Aorta (tissue), 5 donors: ENCODE measurements at regions of chr12 and their contacts with region 1.

Region 1: GRCh38 chr12:53065975-53066931 is 12.9 kb downstream of the SPRYD3 start:
- DNase-seq: peak; percentile 86 to 93
- ATAC-seq: peak; percentile 79
- H3K4me3 ChIP-seq: no peak overlapping the region
- H3K27ac ChIP-seq: peak overlapping the region in 1 of 2 donors; percentile 80
- H3K4me1 ChIP-seq: no peaks in the 10 kb centered on the region
- H3K27me3 ChIP-seq: no peaks in the 10 kb centered on the region

Region 2: DNA sequence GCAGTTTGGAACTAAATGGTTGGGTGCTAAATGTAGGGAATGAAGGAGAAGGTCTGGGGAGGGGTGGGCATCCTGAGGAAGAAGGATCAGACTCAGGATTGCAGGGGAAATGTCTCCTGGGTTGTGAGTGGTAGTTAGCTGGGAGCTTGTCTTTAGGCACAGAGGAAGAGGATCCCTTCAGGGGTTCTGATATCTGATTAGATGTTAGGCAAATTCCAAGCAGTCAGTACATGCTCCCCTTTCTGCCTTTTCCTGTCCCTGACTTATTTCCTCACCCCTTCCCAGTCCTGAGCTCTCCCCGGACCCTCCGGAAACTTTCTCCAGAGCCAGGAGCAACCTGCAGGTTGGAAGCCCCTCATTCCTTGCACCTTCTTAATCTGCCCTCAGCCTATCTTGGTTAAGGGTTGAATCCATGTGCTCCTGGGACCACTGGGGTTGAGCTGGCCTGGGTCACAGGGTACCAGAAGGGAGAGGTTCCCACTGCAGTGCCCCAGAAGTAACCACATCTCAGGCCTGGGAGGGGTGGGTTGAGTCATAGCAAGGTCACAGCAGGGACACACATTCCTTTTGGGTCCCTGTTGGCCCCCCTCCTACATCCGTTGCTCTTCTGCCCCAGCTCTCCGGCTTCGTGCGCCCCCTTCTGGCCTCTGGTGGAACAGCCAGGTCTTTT is 32.9 kb after region 1 on chr12:
- intact Hi-C with region 1: loop called (anchors 2 to 5 kb)
- DNase-seq: peak; percentile 94 to 98
- ATAC-seq: peak; percentile 89
- H3K4me3 ChIP-seq: no peak overlapping the region
- H3K27ac ChIP-seq: peak overlapping the region; percentile 60 to 78
- H3K4me1 ChIP-seq: no peaks in the 10 kb centered on the region
- H3K27me3 ChIP-seq: no peaks in the 10 kb centered on the region

Region 3: DNA sequence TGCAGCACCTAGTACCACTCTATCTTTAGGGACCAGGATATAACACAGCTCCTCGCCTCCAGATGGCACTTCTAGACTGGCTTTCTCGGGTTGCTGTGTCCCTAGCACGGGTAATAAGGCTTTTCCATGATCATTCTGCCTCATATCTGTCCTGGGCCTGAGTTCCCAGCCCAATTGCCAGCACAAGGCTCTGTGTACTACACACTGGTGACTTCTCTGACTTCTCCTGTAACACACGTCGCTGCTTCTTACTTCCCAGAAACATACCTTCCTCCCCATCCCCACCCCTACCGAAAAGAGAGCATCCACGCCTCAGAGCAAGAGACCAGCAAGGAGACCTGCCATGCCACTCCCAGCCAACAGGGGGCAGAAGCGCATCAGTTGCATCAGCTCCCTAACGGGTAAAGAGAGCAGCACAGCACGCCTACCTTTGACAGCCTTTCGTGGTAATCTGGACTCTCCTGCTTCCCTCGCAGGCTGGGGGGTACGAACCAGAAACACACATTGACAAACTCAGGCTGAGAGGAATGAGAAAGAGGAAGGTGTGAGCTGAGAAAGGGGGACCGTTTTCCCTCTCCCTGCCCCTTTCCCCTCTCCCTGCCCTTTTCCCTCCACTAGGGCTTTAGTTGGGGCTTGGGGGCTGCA is 93.1 kb after region 1 on chr12:
- intact Hi-C with region 1: loop called (anchors 2 to 10 kb)
- DNase-seq: peak; percentile 91 to 96
- ATAC-seq: peak; percentile 90
- H3K4me3 ChIP-seq: no peak overlapping the region
- H3K27ac ChIP-seq: peak overlapping the region in 1 of 2 donors; percentile 76
- H3K4me1 ChIP-seq: no peaks in the 10 kb centered on the region
- H3K27me3 ChIP-seq: no peaks in the 10 kb centered on the region

Region 4: DNA sequence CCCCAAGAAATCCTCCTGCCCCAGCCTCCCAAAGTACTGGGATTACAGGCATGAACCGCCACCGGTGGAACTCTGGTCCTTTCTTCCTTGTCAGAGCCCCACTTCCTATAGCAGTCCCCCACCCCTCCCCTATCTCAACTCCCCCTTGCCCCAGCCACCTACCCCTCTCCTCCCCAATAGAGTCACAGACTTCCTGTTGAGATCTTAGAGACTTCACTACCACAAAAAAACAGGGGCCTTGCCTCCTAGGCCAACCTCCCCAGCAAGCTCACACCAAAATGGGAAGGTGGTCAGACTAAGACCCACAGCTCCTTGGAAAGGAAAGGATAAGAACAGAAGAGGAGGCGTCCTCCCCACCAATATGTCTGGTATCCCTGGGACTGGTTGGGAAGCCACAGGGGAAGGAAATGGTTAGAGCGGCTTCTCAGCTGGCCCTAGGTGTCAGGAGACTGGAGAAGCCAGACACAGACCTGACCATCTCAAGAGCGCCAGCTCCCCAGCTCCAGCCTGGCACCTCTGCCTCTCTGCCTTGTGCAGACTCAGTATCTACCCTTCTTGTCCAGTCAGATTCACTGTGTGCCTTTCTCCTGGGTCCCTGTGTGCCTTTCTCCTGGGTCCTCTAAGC is 132.3 kb after region 1 on chr12:
- intact Hi-C with region 1: loop called (anchors 1 to 2 kb)
- DNase-seq: peak in 1 of 2 donors; percentile 37
- ATAC-seq: no peak
- H3K4me3 ChIP-seq: no peak overlapping the region
- H3K27ac ChIP-seq: no peak overlapping the region
- H3K4me1 ChIP-seq: no peaks in the 10 kb centered on the region
- H3K27me3 ChIP-seq: no peaks in the 10 kb centered on the region

Region 5: DNA sequence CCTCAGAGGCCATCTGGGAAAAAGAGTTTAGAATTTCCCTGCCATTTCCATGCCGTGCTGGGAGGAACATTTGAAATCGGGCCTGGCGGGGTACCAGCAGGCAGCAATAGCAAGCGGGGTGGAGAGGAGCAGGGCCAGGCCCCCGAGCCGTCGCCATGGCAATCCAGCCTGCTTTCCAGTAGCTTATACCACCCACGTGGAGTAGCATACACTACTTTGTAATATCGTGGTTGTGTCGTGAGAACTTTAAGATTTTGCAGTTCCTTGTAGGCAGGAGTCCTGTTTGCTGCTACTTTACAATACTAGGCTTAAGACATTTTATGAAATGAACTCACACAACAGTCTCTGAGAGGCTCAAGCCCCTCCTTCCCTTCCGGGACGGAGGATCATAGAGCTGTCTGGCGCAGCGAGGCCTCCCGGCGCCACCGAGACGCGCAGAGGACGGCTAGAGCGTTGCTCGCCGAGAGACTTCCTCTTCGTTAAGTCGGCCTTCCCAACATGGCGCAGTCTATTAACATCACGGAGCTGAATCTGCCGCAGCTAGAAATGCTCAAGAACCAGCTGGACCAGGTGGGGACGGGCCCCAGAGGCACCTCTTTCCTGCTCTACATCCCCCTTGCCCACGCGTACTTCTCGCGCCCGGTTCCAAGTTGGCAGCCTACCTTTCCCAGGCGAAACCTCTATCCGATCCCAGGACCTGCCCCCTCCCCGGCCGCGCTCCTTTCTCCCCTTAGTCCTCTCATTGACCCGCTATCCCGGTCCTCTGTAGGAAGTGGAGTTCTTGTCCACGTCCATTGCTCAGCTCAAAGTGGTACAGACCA is 229.0 kb after region 1 on chr12 and contains the start of gene PFDN5:
- intact Hi-C with region 1: loop called in 1 of 2 experiments (anchors 10 kb)
- DNase-seq: peak; percentile 95
- ATAC-seq: peak; percentile 94
- H3K4me3 ChIP-seq: peak within 1 kb of the TSS; percentile 62 to 91
- H3K27ac ChIP-seq: peak within 1 kb of the TSS; percentile 33 to 55
- H3K4me1 ChIP-seq: no peaks in the 10 kb centered on the region
- H3K27me3 ChIP-seq: no peaks in the 10 kb centered on the region
- total RNA-seq, gene PFDN5: 386 to 452 TPM